ENCODE measurements at regions of chr15 and their contacts with region 1.

Region 1: DNA sequence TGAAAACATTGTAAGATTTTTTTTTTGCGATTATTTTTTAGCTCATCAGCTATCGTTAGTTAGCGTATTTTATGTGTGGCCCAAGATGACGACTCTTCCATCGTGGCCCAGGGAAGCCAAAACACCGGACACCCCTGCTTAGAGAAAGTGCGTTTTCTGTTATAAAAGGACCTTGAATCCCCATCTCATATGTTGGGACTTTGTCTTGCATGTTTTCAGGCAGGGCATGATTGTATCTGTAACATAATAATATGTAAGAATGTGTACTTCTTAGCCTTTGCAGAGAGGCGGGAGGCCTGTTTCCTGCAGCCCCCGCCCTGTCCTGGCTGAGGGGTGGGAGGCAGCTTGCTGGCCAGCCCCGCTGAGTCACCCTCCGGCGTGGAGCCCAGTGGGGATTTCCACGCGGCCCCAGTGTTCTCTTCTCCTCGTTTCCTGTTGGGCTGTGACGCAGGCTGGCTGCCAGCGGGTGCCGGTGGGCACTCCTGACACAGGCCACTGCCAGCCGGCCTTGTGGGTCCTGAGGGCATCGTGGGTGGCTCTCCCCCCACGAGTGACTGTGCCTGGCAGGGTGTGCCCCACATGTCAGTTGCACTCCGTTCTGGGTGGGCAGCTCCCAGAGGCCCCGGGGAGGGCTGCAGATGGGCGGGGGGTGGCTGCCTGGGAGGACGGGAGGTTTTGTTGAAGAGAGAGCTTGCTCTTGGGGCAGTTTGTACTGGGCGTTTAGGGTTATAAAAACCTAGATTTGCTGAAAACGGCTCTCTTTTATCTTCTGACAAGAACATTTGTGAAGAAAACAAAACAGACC is 55.6 kb downstream of the SMAD3 start:
- DNase-seq: peak; percentile 87 to 90
- ATAC-seq: peak; percentile 6 to 24; a peak in 4 of 6 replicates
- H3K4me3 ChIP-seq: peak overlapping the region; percentile 2; the same call in 1 of the 3 replicates
- H3K27ac ChIP-seq: peak overlapping the region; percentile 86 to 92
- H3K4me1 ChIP-seq: peaks cover 97% of the 10 kb centered on the region
- CTCF ChIP-seq: no peak
- EP300 ChIP-seq: peak; percentile 80 to 94; a peak in 3 of 5 replicates
- POLR2A ChIP-seq: no peak
- RAD21 ChIP-seq: peak; percentile 2 to 27; a peak in 2 of 5 replicates

Region 2: DNA sequence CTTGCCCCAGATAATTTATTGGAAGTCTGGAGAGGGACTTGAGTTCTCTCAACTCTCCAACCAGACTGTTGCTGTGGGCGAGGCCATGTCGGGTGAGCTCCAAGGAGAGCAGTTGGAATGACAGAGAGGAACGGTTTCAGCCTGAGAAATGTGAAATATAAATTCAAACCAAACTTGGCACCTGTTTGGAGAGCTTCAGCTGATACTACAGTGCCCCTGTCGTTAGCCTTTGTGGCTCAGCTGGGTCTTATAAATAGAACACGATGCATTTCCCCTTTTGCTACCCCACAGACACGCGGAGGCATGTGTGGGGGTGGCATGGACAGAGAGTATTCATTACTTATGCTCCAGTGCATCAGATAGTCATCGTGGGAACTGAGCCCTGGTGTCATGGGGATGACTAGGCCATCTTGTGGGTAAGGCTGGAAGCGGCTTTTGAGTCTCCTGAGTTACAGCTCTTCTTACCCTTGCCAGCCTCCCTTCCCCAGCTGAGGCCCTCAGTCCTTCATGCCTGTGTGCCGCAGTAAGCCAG is 40.1 kb before region 1 on chr15:
- CTCF ChIA-PET with region 1: interaction called, 10 read pairs
- POLR2A ChIA-PET with region 1: no interaction called
- DNase-seq: peak in 1 of 2 experiments; percentile 71
- ATAC-seq: peak in 1 of 2 experiments; percentile 7; a peak in 2 of 6 replicates
- H3K4me3 ChIP-seq: no peak overlapping the region
- H3K27ac ChIP-seq: peak overlapping the region in 1 of 2 experiments; percentile 62; a peak in 4 of 6 replicates
- H3K4me1 ChIP-seq: peaks cover 99% of the 10 kb centered on the region
- CTCF ChIP-seq: peak; percentile 31; the same call in 2 of the 3 replicates
- EP300 ChIP-seq: no peak
- POLR2A ChIP-seq: no peak
- RAD21 ChIP-seq: peak in 1 of 2 experiments; percentile 32; a peak in 3 of 5 replicates

Region 3: GRCh38 chr15:67134067-67134838 is 13.2 kb after region 1 on chr15:
- CTCF ChIA-PET with region 1: interaction called, 46 read pairs
- POLR2A ChIA-PET with region 1: interaction called, 18 read pairs
- DNase-seq: peak; percentile 47 to 90
- ATAC-seq: peak; percentile 57 to 65
- H3K4me3 ChIP-seq: peak overlapping the region; percentile 12; the same call in 1 of the 3 replicates
- H3K27ac ChIP-seq: peak overlapping the region; percentile 92
- H3K4me1 ChIP-seq: peaks cover 100% of the 10 kb centered on the region
- CTCF ChIP-seq: no peak
- EP300 ChIP-seq: no peak
- POLR2A ChIP-seq: no peak
- RAD21 ChIP-seq: no peak